ENCODE measurements at regions of chr2 and their contacts with region 1.

Region 1: DNA sequence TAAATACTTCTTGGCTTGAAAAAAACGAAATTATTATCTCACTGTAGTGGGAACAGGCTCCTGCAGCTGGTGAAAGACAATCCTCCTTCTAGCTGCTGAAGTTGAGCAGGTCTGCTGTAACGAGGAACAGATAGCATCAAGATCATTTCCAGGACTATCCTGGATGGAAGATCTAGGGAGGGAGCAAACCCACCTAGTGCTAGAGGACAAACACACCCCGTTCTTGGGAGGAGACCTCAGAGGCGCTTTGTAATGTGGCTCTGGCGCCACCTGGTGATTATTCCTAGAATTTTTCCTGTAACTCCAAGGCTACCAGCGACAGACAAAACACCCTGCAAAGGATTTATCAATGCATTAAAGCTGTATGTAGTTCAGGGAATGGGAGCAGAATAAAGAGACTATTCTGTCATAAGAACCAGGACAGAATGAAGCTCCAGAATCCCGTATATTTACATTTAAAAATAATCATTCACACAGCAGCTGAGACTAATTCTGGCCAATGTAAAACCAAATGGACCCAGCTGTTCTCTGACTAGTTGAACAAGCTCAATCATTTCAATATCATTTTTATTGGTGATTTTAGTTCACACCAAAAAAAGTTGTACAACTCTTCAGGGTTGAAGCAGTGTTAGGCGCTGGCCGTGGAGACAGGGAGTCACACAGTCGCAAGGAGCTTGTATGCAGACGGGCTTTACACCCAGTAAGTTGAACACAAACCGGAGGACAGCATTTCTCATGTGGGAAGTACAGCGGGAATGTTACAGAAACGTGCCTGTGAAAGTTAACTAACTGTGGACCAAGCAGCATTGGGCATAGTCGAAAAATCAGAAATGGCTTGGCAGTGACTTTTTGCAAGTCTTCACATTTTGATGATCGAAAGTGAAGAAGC is 290.3 kb downstream of the TRIB2 start:
- H3K4me3 ChIP-seq: no peak overlapping the region
- H3K27ac ChIP-seq: no peak overlapping the region
- H3K4me1 ChIP-seq: 0 out of 2 replicates have a peak, but pooled peaks cover 2% of the 10 kb centered on the region
- CTCF ChIP-seq: peak; percentile 74

Region 2: GRCh38 chr2:11829947-11830707 is 1176.9 kb before region 1 on chr2:
- CTCF ChIA-PET with region 1: interaction called, 32 read pairs
- POLR2A ChIA-PET with region 1: interaction called, 3 read pairs
- H3K4me3 ChIP-seq: peak overlapping the region; percentile 27
- H3K27ac ChIP-seq: peak overlapping the region; percentile 75
- H3K4me1 ChIP-seq: peaks cover 10% of the 10 kb centered on the region
- CTCF ChIP-seq: peak; percentile 88

Region 3: GRCh38 chr2:12061286-12062052 is 945.6 kb before region 1 on chr2:
- CTCF ChIA-PET with region 1: interaction called, 10 read pairs
- POLR2A ChIA-PET with region 1: no interaction called
- H3K4me3 ChIP-seq: no peak overlapping the region
- H3K27ac ChIP-seq: no peak overlapping the region
- H3K4me1 ChIP-seq: peaks cover 10% of the 10 kb centered on the region; the same call in 1 of the 2 replicates
- CTCF ChIP-seq: no peak

Region 4: DNA sequence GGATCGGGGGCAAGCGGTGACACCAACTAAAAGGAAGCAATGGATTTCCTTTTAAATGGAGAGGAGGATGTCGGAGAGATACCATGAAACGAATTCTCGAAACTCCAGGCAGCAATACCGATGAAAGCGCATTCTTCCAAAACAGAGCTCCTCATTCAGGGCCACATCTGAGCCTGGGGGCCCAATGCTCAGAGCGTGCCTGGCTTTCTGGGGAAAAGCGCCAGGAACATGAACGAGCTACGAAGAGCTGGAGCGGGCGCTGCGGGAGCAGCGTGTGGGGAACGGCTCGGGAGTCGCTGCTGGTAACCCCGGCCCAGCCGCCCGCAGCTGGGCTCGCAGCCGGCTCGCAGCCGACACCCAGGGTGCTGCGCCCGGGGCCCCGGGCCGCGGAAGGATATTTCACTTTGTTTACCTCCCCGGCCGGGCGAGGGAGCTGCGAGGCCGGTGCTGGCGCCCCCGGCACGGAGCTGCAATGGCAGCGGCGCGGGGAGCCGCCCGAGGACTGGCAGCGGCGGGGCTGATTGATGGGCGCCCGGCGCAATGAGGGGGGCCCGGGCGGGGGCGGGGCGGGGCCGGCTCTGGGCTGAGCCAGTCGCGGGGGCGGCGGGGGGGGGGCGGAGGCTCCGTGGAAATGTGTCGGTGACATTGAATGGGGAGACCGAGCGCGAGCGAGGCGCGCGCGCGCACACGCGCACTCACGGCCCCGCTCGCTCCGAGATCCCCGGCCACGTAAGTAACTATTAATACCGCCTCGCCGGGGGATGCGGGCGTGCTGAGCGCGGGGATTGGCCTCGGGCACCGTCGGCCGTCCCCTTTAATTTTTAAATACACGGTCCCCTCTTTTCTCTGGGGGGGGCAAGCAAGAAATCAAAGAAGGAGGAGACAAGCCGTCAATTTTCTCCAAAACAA is 290.5 kb before region 1 on chr2 and contains the start of gene TRIB2:
- CTCF ChIA-PET with region 1: interaction called, 23 read pairs
- POLR2A ChIA-PET with region 1: interaction called, 3 read pairs
- H3K4me3 ChIP-seq: peak within 1 kb of the TSS; percentile 84
- H3K27ac ChIP-seq: peak within 1 kb of the TSS; percentile 99
- H3K4me1 ChIP-seq: peaks cover 18% of the 10 kb centered on the region
- CTCF ChIP-seq: peak; percentile 15; the same call in 1 of the 2 replicates

Region 5: DNA sequence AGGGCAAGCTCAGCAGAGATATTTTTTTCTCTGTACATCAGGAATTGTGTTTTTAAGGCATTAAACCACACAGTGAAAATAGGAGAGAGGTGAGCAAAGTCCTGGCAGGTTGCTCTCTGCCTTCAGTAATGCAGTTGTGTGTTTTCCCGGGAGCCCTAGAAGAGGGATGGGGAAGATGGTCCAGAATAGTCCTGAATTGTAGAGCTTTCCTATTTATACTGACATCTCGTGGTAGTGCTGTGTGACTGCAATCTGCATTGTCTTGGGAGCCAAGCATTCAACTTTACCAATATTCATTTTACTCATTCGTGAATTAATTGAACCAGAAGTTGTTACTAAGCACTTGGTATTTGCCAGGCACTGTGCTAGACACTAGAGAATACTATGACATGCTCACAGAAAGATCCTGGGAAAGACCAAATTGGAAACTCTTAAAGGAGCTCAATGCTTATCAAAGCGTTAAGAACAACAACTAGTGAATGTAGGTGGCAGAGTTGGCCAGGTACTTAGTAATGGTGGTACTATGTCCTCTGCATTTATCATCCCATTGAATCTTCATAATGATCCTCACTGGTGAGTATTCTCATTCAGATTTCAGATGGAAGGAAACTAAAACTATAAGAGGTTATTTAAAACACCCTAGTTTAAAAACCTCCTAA is 75.8 kb before region 1 on chr2:
- CTCF ChIA-PET with region 1: interaction called, 15 read pairs
- POLR2A ChIA-PET with region 1: no interaction called
- H3K4me3 ChIP-seq: no peak overlapping the region
- H3K27ac ChIP-seq: peak overlapping the region; percentile 86
- H3K4me1 ChIP-seq: peaks cover 27% of the 10 kb centered on the region
- CTCF ChIP-seq: no peak

Region 6: GRCh38 chr2:12990523-12990922 is 16.6 kb before region 1 on chr2:
- CTCF ChIA-PET with region 1: interaction called, 12 read pairs
- POLR2A ChIA-PET with region 1: no interaction called
- H3K4me3 ChIP-seq: no peak overlapping the region
- H3K27ac ChIP-seq: no peak overlapping the region
- H3K4me1 ChIP-seq: no peaks in the 10 kb centered on the region
- CTCF ChIP-seq: no peak

Region 7: DNA sequence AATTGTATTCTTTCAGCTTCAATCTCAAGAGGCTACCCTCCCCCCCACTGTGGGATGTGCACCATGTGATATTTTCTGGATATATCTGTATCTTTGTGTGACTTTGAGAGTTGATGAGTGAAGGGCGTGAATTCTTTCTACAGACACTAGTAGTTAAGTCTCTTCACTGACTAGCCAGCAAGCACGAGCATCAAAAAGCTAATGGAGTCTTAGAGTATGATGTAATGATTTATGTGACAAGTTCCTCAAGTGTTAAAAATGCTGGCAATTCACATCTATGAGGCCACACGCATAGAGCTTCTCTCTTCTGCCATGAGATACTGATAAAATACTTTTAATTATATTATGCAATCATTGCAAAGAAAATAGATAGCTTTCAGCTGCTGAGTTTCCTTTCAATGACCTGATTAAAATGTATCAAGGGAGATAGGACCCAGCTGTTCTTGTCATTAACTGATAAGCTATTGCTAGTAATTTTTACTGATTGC is 14.4 kb after region 1 on chr2:
- CTCF ChIA-PET with region 1: interaction called, 14 read pairs
- POLR2A ChIA-PET with region 1: no interaction called
- H3K4me3 ChIP-seq: no peak overlapping the region
- H3K27ac ChIP-seq: no peak overlapping the region
- H3K4me1 ChIP-seq: peaks cover 6% of the 10 kb centered on the region; the same call in 1 of the 2 replicates
- CTCF ChIP-seq: no peak

Region 8: GRCh38 chr2:13102397-13103063 is 95.5 kb after region 1 on chr2:
- CTCF ChIA-PET with region 1: no interaction called
- POLR2A ChIA-PET with region 1: no interaction called
- H3K4me3 ChIP-seq: no peak overlapping the region
- H3K27ac ChIP-seq: no peak overlapping the region
- H3K4me1 ChIP-seq: no peaks in the 10 kb centered on the region
- CTCF ChIP-seq: no peak

Measured in HEK293 (cell line).